ENCODE measurements at regions of chrX and their contacts with region 1.

Region 1: DNA sequence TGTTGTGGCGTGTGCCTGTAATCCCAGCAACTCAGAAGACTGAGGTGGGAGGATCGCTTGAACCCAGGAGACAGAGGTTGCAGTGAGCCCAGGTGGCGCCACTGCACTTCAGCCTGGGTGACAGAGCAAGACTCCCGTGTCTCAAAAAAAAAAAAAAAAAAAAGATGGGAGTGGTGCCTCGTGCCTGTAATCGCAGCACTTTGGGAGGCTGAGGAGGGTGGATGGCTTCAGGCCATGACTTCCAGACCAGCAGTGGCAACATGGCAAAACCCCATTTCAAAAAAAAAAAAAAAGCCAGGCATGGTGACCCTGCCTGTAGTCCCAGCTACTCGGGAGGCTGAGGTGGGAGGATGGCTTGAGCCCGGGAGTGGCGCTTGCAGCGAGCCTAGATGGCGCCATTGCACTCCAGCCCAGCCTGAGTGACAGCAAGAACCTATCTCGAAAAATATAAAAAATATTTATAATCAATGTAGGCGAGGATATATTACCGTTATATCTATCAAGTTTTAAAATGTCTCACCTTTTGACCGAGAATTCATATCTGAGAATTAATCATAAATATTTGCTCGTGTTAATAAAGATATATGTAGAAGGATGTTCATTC is 27.0 kb downstream of the EIF2S3 start:
- DNase-seq: peak; percentile 34 to 78 (median 62)
- H3K4me3 ChIP-seq: no peak overlapping the region
- H3K27ac ChIP-seq: no peak overlapping the region
- H3K4me1 ChIP-seq: no peaks in the 10 kb centered on the region
- H3K27me3 ChIP-seq: no peaks in the 10 kb centered on the region
- CTCF ChIP-seq: peak in 5 of 6 experiments; percentile 11 to 40 (median 24)
- POLR2A ChIP-seq: no peak

Region 2: DNA sequence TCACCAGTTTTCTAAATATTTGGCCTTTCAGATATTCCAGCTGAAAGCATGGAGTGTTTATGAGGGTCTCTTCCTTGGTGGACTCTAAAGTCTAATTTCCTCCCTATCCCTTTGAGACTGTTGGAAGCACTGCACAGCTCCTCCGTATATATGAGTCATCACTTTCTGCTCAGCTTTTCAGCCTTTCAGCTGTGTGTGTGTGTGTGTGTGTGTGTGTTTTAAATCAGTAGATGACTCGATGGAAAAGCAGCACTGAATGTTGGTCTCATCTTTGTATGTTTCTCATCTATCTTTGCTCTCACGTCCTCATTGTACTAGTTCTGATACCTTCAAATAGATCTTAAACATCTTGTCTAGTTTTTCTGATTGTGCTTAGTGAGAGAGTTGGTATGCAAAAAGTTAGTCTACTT is 149.4 kb after region 1 on chrX:
- intact Hi-C with region 1: loop called in 1 of 2 experiments (anchors 10 kb)
- DNase-seq: peak in 6 of 7 donors; percentile 33 to 64 (median 55)
- H3K4me3 ChIP-seq: no peak overlapping the region
- H3K27ac ChIP-seq: no peak overlapping the region
- H3K4me1 ChIP-seq: no peaks in the 10 kb centered on the region
- H3K27me3 ChIP-seq: no peaks in the 10 kb centered on the region
- CTCF ChIP-seq: no peak
- POLR2A ChIP-seq: no peak

Region 3: GRCh38 chrX:24241822-24242648 is 160.3 kb after region 1 on chrX:
- intact Hi-C with region 1: loop called (anchors 5 to 10 kb)
- DNase-seq: peak in 3 of 7 donors; percentile 13 to 32 (median 21)
- H3K4me3 ChIP-seq: no peak overlapping the region
- H3K27ac ChIP-seq: no peak overlapping the region
- H3K4me1 ChIP-seq: no peaks in the 10 kb centered on the region
- H3K27me3 ChIP-seq: no peaks in the 10 kb centered on the region
- CTCF ChIP-seq: peak; percentile 16 to 59 (median 42)
- POLR2A ChIP-seq: no peak